Naive thymus-derived CD4-positive, alpha-beta T cell (primary cell): ENCODE measurements at regions of chr1 and their contacts with region 1.

Region 1: GRCh38 chr1:243255791-243256512 is at the start of gene SDCCAG8:
- DNase-seq: peak; percentile 75 to 97 (median 94)
- ATAC-seq: peak; percentile 85
- H3K4me3 ChIP-seq: peak within 1 kb of the TSS; percentile 94
- H3K4me3 Mint-ChIP-seq: peak within 1 kb of the TSS; percentile 97 to 100 (median 100)
- H3K27ac ChIP-seq: peak within 1 kb of the TSS; percentile 96
- H3K27ac Mint-ChIP-seq: peak within 1 kb of the TSS; percentile 99 to 100 (median 100)
- H3K4me1 ChIP-seq: peaks cover 13 to 22% of the 10 kb centered on the region in 2 donors
- H3K4me1 Mint-ChIP-seq: peaks cover 19 to 66% (median 51%) of the 10 kb centered on the region in 7 donors
- H3K27me3 ChIP-seq: no peaks in the 10 kb centered on the region
- H3K27me3 Mint-ChIP-seq: peaks cover 0 to 3% (median 0%) of the 10 kb centered on the region in 5 donors
- total RNA-seq, gene SDCCAG8: 26.0 to 45.2 (median 41.4) TPM

Region 2: DNA sequence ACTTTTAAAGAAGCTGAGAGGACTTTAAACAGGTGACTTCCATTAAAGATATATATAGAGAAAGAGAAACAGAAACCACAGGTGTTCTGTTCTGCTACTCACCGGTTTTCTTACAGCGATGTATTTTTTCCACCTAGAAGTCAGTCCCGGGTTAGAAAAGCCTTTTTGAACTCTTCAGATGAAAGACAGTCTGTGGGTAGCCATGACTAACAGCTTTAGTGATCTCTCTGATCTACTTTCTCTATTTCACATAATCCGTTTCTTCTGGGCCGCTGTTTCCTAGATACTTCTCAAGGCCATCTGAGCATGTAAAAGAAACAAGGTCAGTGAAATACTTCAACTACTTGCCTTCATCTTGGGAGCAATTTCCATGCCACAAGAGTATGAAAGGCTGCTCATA is 1578.8 kb before region 1 on chr1:
- CTCF ChIA-PET with region 1: no interaction called
- POLR2A ChIA-PET with region 1: no interaction called
- intact Hi-C with region 1: loop called in 1 of 2 experiments (anchors 1 kb)
- DNase-seq: peak in 8 of 9 donors; percentile 23 to 83 (median 75)
- ATAC-seq: peak; percentile 97
- H3K4me3 ChIP-seq: peak overlapping the region; percentile 28
- H3K4me3 Mint-ChIP-seq: peak overlapping the region; percentile 53 to 88 (median 76)
- H3K27ac ChIP-seq: peak overlapping the region; percentile 55
- H3K27ac Mint-ChIP-seq: peak overlapping the region; percentile 85 to 97 (median 90)
- H3K4me1 ChIP-seq: peaks cover 8 to 21% of the 10 kb centered on the region in 2 donors
- H3K4me1 Mint-ChIP-seq: peaks cover 4 to 30% (median 20%) of the 10 kb centered on the region in 7 donors
- H3K27me3 ChIP-seq: no peaks in the 10 kb centered on the region
- H3K27me3 Mint-ChIP-seq: peaks cover 0 to 6% (median 0%) of the 10 kb centered on the region in 5 donors

Region 3: GRCh38 chr1:243234978-243235647 is 20.8 kb before region 1 on chr1:
- CTCF ChIA-PET with region 1: no interaction called
- POLR2A ChIA-PET with region 1: interaction called, 10 read pairs
- intact Hi-C with region 1: no loop called
- DNase-seq: no peak
- ATAC-seq: no peak
- H3K4me3 ChIP-seq: no peak overlapping the region
- H3K4me3 Mint-ChIP-seq: no peak overlapping the region
- H3K27ac ChIP-seq: no peak overlapping the region
- H3K27ac Mint-ChIP-seq: peak overlapping the region in 1 of 9 donors; percentile 18
- H3K4me1 ChIP-seq: no peaks in the 10 kb centered on the region
- H3K4me1 Mint-ChIP-seq: peaks cover 0 to 26% (median 16%) of the 10 kb centered on the region in 7 donors
- H3K27me3 ChIP-seq: no peaks in the 10 kb centered on the region
- H3K27me3 Mint-ChIP-seq: no peaks in the 10 kb centered on the region

Region 4: DNA sequence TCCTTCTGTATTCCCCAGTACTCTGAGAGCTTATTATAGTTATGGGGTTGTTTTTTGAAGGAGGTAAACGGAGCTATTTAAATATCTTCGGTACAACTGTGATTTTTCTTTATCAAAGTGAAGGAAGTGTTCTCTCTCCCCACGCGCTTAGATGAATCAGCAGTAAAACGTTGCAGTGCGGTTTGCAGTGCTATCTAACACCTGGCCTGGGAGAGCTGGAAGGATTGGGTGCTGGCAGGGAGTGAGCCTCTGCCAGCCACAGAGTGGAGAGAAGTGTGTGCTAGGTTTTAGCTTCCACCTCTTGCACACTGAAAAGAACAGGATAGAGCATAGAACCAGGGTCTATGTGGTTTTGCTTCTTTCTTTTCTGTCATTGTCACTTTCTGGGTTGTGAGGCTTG is 165.8 kb after region 1 on chr1:
- CTCF ChIA-PET with region 1: no interaction called
- POLR2A ChIA-PET with region 1: no interaction called
- intact Hi-C with region 1: loop called in 1 of 2 experiments (anchors 1 kb)
- DNase-seq: peak in 8 of 9 donors; percentile 13 to 58 (median 39)
- ATAC-seq: peak; percentile 87
- H3K4me3 ChIP-seq: peak overlapping the region; percentile 6
- H3K4me3 Mint-ChIP-seq: peak overlapping the region; percentile 5 to 80 (median 62)
- H3K27ac ChIP-seq: no peak overlapping the region
- H3K27ac Mint-ChIP-seq: peak overlapping the region in 5 of 9 donors; percentile 1 to 81 (median 17)
- H3K4me1 ChIP-seq: peaks cover 9% of the 10 kb centered on the region in 2 donors
- H3K4me1 Mint-ChIP-seq: peaks cover 12 to 42% (median 22%) of the 10 kb centered on the region in 7 donors
- H3K27me3 ChIP-seq: no peaks in the 10 kb centered on the region
- H3K27me3 Mint-ChIP-seq: no peaks in the 10 kb centered on the region

Region 5: DNA sequence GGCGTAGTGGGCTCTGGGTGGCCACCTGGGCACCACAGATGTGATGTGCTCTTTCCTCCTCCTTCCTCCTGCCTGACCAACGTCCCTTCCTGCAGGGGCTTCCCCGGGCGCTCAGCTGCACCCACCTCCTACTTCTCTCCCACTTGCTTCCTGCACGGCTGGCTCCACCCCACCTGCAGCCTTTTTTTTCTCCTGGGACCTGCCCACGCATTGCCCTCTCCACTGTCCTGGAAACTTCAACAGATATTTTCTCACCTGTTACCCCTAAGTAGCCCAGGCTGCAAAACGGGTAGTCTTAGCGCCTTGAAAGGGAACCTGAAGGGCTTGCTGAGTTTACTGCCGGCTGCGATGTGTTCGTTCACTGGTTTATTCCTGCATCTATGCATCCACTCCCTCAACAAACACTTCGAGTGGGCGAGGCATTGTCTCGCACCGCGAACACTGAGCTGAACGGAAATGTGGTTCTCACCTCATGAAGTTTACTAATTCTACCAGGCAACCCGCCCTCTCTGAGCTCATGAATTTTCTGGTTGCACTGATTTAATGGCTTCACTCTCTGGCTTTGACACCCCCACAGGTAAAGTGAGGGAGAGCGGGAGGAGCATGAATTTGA is 818.7 kb after region 1 on chr1:
- CTCF ChIA-PET with region 1: no interaction called
- POLR2A ChIA-PET with region 1: interaction called, 11 read pairs
- intact Hi-C with region 1: no loop called
- DNase-seq: peak; percentile 36 to 91 (median 86)
- ATAC-seq: peak; percentile 96
- H3K4me3 ChIP-seq: peak overlapping the region; percentile 45
- H3K4me3 Mint-ChIP-seq: peak overlapping the region; percentile 75 to 91 (median 88)
- H3K27ac ChIP-seq: peak overlapping the region; percentile 73
- H3K27ac Mint-ChIP-seq: peak overlapping the region; percentile 50 to 99 (median 97)
- H3K4me1 ChIP-seq: peaks cover 16 to 32% of the 10 kb centered on the region in 2 donors
- H3K4me1 Mint-ChIP-seq: peaks cover 19 to 64% (median 54%) of the 10 kb centered on the region in 7 donors
- H3K27me3 ChIP-seq: no peaks in the 10 kb centered on the region
- H3K27me3 Mint-ChIP-seq: peaks cover 0 to 20% (median 0%) of the 10 kb centered on the region in 5 donors

Region 6: DNA sequence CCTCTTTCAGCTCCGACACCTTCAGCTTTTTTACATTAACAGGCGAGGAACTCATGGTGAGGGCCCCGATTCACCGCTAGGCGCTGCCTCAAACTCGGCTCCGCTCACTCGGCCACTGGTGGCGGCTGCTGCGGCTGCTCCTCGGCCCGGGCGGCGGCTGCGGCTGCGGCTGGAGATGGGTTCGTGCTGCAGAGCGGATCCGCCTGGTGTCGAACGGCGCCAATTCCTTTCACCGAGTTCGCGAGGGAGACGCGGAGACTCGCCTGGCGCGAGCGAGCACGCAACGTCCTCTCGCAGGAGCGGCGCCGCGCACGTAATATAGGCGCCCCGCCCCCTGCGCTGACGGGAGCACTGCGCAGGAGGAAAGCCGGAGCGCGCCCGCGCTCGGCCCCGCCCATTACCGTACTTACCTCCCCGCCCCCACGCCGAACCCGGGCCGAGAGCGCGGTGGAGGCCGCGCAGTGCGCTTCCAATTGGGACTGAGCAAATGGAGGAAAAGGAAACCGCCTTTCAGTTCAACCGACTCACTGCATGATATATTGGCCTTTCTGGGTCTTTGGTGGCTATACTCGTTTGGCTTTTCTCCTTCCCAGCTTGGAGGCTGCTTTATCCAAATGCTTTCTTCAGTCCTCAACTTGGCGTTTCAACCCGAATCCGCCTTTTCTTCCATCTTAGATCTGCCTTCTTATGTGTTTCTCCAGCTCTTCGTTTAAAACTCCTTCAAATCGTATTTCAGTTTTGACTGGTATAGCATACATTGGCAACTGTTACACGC is 1608.5 kb after region 1 on chr1 and contains the start of gene HNRNPU:
- CTCF ChIA-PET with region 1: no interaction called
- POLR2A ChIA-PET with region 1: interaction called, 7 read pairs
- intact Hi-C with region 1: loop called (anchors 1 to 10 kb)
- DNase-seq: peak; percentile 93 to 99 (median 98)
- ATAC-seq: peak; percentile 81
- H3K4me3 ChIP-seq: peak within 1 kb of the TSS; percentile 78
- H3K4me3 Mint-ChIP-seq: peak within 1 kb of the TSS; percentile 86 to 98 (median 98)
- H3K27ac ChIP-seq: peak within 1 kb of the TSS; percentile 100
- H3K27ac Mint-ChIP-seq: peak within 1 kb of the TSS; percentile 93 to 100 (median 98)
- H3K4me1 ChIP-seq: peaks cover 23 to 25% of the 10 kb centered on the region in 2 donors
- H3K4me1 Mint-ChIP-seq: peaks cover 39 to 56% (median 51%) of the 10 kb centered on the region in 7 donors
- H3K27me3 ChIP-seq: no peaks in the 10 kb centered on the region
- H3K27me3 Mint-ChIP-seq: peaks cover 0 to 3% (median 0%) of the 10 kb centered on the region in 5 donors
- total RNA-seq, gene HNRNPU: 378 to 509 (median 428) TPM